ENCODE measurements at regions of chr16 and their contacts with region 1.

Region 1: GRCh38 chr16:58000706-58001676 is at the start of gene USB1:
- DNase-seq: peak; percentile 85
- H3K4me3 Mint-ChIP-seq: peak within 1 kb of the TSS; percentile 90
- H3K27ac Mint-ChIP-seq: peak within 1 kb of the TSS; percentile 87
- H3K4me1 Mint-ChIP-seq: peaks cover 62% of the 10 kb centered on the region
- H3K27me3 Mint-ChIP-seq: no peaks in the 10 kb centered on the region

Region 2: DNA sequence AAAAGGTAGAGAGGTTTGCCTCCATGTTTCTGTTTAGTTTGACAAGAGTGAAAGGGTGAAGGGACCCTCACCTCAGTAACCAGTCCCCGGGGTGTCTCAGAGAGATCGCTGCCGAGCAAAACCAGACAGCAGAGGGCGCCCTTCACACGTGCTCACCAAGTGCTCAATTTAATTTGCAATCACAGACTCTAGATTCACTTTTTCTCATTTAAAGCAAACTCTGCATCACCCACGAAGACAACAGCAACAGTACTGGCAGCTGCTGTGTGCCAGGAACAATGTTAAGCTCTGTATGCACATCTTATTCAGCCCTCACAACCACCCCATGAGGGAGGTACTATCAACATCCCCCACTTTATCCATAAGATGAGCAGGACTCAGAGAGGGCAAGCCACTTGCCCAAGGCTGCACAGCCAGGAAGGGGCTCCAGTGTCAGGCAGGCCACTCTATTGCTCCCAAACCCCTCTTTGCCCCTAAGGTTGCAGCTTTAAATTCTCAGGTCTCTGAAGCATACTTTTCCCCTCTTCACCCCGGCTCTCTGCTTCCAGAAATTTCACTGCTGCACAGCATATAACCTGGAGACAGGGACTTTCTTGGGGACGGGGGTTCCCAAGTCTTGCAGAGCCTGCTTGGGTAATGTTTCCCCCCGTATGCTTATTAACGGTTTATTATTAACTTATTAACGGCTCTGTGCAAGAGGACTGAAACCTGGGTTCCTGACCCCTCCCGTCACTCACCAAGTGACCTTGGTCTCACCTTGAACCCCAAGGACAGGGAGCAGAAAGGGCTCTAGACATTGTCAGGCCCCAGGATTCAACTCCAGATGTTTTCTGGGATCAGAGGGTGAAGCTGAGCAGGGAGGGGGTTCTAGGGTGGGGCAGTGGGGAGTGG is 101.0 kb before region 1 on chr16:
- CTCF ChIA-PET with region 1: interaction called, 26 read pairs
- DNase-seq: peak; percentile 88
- H3K4me3 Mint-ChIP-seq: no peak overlapping the region
- H3K27ac Mint-ChIP-seq: no peak overlapping the region
- H3K4me1 Mint-ChIP-seq: peaks cover 4% of the 10 kb centered on the region
- H3K27me3 Mint-ChIP-seq: peaks cover 37% of the 10 kb centered on the region

Region 3: DNA sequence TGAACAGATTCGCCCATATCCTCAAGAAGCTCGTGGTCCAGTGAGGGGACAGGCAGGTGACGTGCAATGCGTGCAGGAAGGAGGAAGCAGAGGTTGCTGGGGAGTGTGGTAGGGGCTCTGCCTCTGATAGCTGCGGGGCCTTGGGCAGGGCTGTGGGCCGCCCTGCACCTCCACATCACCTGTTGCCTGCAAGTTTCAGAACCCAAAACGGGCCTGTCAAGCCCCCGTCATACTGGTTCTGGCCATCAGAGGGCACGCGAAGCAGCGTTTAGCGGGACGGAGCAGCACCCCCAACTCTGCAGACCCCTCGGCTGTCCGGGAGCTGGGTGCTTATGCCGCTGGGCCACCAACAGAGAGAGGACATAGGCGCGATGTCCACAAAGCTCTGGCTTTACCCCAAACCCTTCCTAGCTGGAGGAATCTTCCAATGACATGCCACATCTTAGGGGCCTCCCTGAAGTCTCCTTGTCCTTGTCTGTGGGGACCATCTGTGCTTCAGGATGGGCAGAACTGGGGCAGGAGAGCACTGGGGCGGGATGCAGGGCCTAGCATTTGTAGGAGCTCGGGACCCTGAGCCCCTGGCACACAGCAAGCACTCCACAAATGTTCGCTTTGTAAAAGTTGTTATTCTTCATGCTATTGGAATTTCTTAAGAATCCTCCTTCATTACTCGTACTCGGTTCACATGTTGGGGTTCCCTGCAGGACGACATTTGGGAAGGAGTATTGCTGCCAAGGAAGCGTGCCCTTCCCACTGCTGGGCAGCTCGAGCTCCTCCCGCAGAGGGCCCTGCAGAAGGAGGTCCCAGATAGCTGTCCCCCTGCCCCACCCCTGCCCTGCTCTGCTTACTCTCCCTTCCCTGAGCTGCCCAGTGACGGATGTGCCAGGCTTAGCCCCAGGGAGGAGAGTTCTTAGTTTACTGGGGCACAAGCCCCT is 94.3 kb before region 1 on chr16:
- CTCF ChIA-PET with region 1: interaction called, 21 read pairs
- DNase-seq: peak; percentile 54
- H3K4me3 Mint-ChIP-seq: no peak overlapping the region
- H3K27ac Mint-ChIP-seq: no peak overlapping the region
- H3K4me1 Mint-ChIP-seq: peaks cover 3% of the 10 kb centered on the region
- H3K27me3 Mint-ChIP-seq: peaks cover 43% of the 10 kb centered on the region

Measured in activated naive CD4-positive, alpha-beta T cell treated with anti-CD3 and anti-CD28 coated beads, Interleukin-2, amount 10 ng/mL, durations not matched to agents 7 days and 5 days (primary cell).